Mammary epithelial cell (primary cell): ENCODE measurements at regions of chr13 and their contacts with region 1.

Region 1: GRCh38 chr13:40666045-40666904 is at the start of gene FOXO1:
- DNase-seq: peak; percentile 84
- H3K4me3 ChIP-seq: peak within 1 kb of the TSS; percentile 63 to 97 (median 93)
- H3K27ac ChIP-seq: peak within 1 kb of the TSS; percentile 39
- H3K4me1 ChIP-seq: peaks cover 13% of the 10 kb centered on the region
- H3K27me3 ChIP-seq: no peaks in the 10 kb centered on the region
- CTCF ChIP-seq: no peak
- total RNA-seq, gene FOXO1: 10.1 to 23.3 TPM

Region 2: DNA sequence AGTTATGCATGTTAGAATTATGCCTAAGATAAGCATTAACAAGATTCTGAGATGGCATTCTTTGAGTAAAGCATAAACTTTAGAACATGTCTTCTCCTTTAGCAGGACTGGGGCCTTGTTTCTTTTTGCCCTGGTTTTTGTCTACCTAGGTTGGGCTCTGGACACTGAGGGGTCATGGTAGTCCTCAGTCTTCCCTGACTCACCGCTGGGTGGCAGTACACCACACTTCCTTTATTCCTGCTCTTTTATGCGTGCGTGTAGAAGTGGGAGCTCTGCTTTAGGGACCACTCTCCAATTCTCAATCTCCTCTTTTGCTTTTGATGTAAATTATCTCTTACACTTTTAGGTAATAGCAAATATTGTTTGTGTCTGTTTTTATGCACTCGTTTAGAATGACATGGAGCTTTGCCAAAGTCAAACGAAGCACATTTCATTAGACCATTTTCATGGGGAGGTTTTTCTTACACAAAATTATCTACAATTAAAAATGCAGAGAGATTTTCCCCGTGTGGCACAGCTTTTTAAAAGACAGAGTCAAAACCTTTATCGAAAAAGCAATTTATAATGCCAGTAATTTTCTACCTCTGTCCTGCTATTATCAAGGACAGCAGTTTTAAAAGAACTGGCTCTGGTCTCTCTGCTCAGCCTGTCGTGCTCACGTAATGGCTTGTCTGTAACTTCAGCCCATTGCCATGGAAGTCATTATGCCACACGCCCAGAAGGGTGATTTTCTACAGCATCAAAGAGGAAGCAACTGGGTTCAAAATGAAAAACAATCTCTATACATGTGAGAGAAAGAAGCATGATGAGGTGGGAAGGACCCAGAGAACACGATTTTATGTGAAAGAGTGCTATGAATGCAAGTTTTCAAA is 596.9 kb before region 1 on chr13:
- CTCF ChIA-PET with region 1: no interaction called
- dilution Hi-C with region 1: no loop called
- in situ Hi-C with region 1: no loop called
- intact Hi-C with region 1: loop called (anchors 1 kb)
- DNase-seq: peak; percentile 51
- H3K4me3 ChIP-seq: no peak overlapping the region
- H3K27ac ChIP-seq: no peak overlapping the region
- H3K4me1 ChIP-seq: peaks cover 6% of the 10 kb centered on the region
- H3K27me3 ChIP-seq: no peaks in the 10 kb centered on the region
- CTCF ChIP-seq: peak; percentile 89 to 92

Region 3: DNA sequence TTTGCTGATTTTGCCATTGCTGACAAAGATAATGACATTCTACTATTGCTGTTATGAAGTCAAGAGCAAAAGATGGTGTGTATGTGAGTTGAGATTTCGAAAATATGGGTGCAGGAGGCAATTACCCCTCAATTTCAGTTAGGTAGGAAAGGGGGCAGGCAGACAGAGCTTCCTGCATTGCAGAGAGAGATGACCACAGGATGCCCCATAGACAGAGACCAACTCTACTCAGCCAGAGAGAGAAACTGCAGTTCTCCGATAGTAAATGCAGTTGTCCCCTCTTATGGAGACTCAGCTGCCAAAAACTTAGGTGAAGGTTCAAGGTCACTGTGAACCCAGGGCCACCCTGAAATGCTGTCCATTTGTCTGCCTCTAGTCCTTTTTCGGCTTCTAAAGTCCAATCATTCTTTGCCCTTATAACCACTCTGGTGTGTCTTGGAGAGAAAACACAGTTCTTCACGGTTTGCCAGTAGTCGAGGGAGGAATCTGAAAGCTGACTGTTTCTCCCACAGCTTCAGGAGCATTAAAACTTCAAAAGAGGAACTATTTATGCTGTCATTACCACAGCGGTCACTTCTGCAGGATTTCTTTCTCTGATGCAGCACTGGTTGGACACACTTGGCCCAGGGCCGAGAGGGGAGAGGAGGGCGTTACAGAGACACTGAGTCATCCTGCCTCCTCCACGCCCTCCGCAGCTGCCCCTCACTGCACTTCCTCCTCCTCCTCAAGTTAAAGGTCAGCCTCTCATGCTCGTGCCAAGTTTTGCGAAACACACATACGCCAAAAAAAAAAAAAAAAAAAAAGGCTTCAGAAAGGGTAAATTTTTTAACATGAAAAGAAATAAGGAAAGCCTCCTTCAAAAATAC is 264.1 kb before region 1 on chr13:
- CTCF ChIA-PET with region 1: no interaction called
- dilution Hi-C with region 1: no loop called
- in situ Hi-C with region 1: no loop called
- intact Hi-C with region 1: loop called (anchors 10 kb)
- DNase-seq: peak; percentile 89
- H3K4me3 ChIP-seq: no peak overlapping the region
- H3K27ac ChIP-seq: no peak overlapping the region
- H3K4me1 ChIP-seq: peaks cover 24% of the 10 kb centered on the region
- H3K27me3 ChIP-seq: no peaks in the 10 kb centered on the region
- CTCF ChIP-seq: no peak

Region 4: DNA sequence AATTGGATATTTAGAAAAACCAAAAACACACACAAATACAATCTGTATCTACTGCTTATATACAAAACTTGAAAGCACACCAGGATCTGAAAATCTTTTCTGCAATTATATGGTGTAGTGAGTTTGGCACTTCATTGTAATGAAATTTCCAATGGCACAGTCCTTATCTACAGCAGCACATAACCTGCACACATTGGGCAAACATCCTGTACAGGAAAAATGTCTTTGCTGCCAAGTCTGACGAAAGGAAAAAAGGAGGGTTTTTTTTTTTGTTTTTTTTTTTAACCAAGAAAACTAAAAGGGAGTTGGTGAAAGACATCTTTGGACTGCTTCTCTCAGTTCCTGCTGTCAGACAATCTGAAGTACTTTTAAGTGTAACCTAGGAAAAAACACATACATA is 107.6 kb before region 1 on chr13:
- CTCF ChIA-PET with region 1: no interaction called
- dilution Hi-C with region 1: no loop called
- in situ Hi-C with region 1: no loop called
- intact Hi-C with region 1: loop called (anchors 5 kb)
- DNase-seq: no peak
- H3K4me3 ChIP-seq: no peak overlapping the region
- H3K27ac ChIP-seq: no peak overlapping the region
- H3K4me1 ChIP-seq: no peaks in the 10 kb centered on the region
- H3K27me3 ChIP-seq: no peaks in the 10 kb centered on the region
- CTCF ChIP-seq: no peak

Region 5: DNA sequence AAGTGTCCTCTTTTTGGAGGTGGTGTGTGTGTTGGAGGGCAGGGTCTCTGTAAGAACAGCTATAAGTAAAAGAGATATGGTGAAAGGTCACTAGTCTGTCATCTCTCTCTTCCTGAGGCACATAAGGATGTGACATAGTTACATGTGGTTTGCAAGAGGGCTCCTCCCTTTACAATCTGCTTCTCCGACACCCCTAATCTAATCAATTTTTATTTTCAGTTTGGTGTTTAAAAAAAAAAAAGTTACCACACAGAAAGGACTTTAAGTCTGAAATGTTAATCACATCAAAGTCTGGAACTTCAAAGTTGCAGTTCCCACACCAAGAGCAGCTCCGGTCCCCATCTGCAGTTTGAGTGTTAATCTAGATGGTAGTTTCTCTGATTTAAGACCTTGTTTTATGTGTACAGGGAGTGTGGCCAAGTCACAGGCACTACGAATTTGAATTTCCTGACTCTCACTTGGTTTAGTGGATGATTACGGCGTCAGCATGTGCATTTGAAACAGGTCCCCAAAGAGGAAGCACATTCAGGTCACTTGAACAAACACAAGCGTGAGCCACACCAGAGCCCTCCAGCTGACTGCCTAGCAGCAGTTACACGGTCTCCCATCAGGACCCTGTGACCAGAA is 53.0 kb before region 1 on chr13:
- CTCF ChIA-PET with region 1: no interaction called
- dilution Hi-C with region 1: no loop called
- in situ Hi-C with region 1: no loop called
- intact Hi-C with region 1: loop called (anchors 5 kb)
- DNase-seq: no peak
- H3K4me3 ChIP-seq: no peak overlapping the region
- H3K27ac ChIP-seq: no peak overlapping the region
- H3K4me1 ChIP-seq: peaks cover 16% of the 10 kb centered on the region
- H3K27me3 ChIP-seq: no peaks in the 10 kb centered on the region
- CTCF ChIP-seq: no peak